Activated naive CD4-positive, alpha-beta T cell treated with anti-CD3 and anti-CD28 coated beads for 36 hours (primary cell): ENCODE measurements at regions of chr9 and their contacts with region 1.

Region 1: DNA sequence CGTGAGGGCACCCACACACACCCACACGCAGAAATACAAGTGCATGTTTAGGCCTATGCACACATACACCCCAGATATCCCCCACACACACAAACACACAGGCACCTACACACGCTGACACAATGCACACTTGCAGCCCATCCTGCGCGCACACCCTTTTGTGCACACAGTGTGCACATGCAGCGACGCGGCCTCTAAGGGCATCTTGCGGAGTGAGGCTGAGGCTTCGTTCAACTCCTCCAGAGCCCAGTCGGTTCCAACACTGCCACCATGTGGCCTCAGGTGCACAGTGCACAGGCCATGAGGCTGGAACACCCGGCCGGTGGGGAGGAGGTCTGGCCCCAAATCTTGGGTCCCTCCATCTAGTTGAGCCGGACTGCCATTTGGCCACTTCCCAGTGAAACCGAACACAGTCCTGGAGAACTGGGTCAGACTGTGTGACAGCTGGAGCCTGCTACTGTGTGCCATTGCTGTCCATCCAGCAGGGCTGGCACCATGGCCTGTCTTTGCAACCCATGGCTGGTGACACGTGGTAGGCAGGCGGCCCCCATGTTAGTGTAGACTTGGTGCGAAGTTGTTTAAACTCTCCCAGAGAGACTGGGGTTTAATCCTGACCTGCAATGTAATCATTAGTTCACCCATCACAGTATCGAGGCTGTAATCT is 97.7 kb upstream of the MVB12B start:
- DNase-seq: peak; percentile 81
- H3K4me3 Mint-ChIP-seq: no peak overlapping the region
- H3K27ac Mint-ChIP-seq: no peak overlapping the region
- H3K4me1 Mint-ChIP-seq: no peaks in the 10 kb centered on the region
- H3K27me3 Mint-ChIP-seq: peaks cover 30% of the 10 kb centered on the region

Region 2: DNA sequence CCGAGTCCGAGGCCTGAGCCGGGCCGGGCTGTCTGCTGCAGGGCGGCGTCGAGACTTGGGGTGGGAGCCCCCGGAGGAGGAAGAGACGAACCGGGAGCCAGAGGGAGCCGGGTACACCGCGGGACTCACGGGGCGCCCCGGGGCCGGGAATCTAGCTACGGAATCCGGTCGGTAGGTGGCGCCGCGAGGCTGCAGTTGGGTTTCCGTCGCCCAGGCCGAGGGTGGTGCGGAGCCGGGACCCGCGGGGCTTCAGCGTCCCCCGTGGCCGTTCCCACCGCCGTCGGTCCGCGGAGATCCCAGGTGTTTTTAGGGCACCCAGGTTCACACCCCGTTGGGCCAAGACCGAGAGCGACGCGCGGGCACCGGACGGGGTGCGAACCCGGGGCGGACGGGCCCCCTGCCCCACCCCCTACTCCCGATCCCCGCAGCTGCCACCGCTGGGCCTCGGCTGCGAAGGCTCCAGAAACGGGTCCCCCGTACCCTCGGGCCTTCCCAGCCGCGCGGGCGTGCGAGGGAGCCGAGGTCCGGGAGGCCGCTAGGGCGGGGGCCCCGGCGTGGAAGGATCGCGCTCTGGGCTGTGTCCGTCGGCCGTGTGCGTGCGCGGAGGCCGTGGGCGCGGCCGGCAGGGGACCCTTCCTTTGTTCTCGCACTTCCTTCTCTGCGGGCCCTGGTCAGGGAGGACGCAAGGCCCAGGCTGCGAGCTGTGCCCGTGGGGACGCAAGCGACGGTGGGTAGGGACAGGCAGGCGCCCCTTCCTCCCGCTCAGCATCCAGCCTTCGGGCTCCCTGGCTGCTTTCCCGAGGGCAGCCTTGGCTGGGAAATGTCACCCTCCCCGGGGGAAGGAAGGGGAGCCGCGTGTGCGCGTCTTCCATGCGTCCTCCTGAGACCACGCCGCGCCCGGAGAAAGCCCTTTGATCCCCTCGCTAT is 820.7 kb before region 1 on chr9:
- CTCF ChIA-PET with region 1: interaction called, 9 read pairs
- intact Hi-C with region 1: loop called (anchors 2 kb)
- DNase-seq: peak; percentile 83
- H3K4me3 Mint-ChIP-seq: peak overlapping the region; percentile 66
- H3K27ac Mint-ChIP-seq: no peak overlapping the region
- H3K4me1 Mint-ChIP-seq: peaks cover 9% of the 10 kb centered on the region
- H3K27me3 Mint-ChIP-seq: peaks cover 23% of the 10 kb centered on the region

Region 3: DNA sequence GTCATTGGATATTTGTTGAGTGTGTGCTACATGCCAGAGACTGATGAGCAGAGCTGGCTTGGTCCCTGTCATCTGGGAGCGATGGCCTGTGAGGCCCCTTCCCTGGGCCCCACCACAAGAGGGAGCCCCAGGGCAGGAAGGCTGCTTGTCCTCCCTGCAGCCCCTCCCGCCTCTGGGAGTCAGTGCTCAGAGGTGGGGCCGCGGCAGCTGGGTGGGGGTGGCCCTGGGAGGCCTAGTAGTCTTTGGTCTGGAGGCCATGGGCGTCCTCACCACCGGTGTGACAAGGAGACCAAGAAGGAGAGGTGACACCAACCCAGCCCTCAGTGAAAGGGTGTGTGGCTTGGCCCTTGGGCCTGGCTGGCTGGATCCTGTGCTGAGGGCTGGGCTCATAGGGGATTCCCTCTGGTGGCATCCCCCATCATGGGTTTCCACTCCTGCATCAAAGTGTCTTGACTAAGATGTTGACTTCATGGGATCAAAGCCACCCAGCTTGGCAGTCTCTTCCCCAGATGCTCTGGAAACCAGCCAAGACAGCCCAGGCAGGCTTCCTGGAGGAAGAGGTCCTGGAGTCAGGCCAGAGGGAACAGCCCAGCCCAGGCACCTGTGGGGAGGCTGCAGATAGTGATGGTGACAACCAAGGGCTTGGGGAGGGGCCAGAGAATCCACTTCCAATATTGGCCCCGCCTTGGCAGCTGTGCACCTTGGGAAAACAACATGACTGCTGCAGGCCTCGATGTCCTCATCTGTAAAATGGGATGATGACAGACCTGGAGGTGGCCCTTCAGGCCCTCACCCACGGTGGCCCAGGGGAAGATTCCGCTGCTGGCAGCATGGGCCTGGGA is 800.6 kb before region 1 on chr9:
- CTCF ChIA-PET with region 1: no interaction called
- intact Hi-C with region 1: loop called (anchors 5 kb)
- DNase-seq: peak; percentile 29
- H3K4me3 Mint-ChIP-seq: no peak overlapping the region
- H3K27ac Mint-ChIP-seq: no peak overlapping the region
- H3K4me1 Mint-ChIP-seq: no peaks in the 10 kb centered on the region
- H3K27me3 Mint-ChIP-seq: no peaks in the 10 kb centered on the region

Region 4: GRCh38 chr9:125558453-125559092 is 670.3 kb before region 1 on chr9:
- CTCF ChIA-PET with region 1: interaction called, 3 read pairs
- intact Hi-C with region 1: loop called (anchors 2 kb)
- DNase-seq: peak; percentile 81
- H3K4me3 Mint-ChIP-seq: no peak overlapping the region
- H3K27ac Mint-ChIP-seq: no peak overlapping the region
- H3K4me1 Mint-ChIP-seq: peaks cover 11% of the 10 kb centered on the region
- H3K27me3 Mint-ChIP-seq: no peaks in the 10 kb centered on the region